ENCODE measurements at regions of chr6 and their contacts with region 1.

Region 1: DNA sequence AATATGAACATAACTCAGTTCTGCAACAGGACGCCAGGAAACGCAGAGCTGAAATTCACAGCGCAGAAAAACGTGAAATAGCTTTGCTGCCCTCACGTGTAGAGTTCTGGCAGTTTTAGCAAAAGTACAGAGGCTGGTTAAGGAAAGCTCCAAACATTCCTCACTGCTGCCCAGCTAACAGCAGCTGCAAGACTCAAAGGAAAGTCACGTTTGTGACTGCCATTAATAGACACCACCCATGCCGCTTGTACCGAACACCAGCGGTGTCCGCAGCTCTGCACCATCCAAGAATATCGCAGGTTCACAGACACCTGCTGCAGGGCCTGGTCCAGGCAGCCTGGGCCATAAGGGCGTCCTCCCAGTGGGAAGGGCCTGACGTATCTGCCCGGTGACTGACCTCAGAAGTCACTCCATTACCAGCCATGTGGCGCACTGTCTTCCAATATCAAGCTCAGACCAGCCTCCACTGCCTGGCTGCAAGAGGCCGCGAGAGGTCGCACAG is 61.4 kb downstream of the WDR27 start:
- DNase-seq: no peak
- H3K4me3 ChIP-seq: no peak overlapping the region
- H3K27ac ChIP-seq: no peak overlapping the region
- H3K4me1 ChIP-seq: no peaks in the 10 kb centered on the region
- H3K27me3 ChIP-seq: no peaks in the 10 kb centered on the region
- CTCF ChIP-seq: peak in 1 of 3 donors; percentile 28
- EP300 ChIP-seq: no peak
- POLR2A ChIP-seq: no peak

Region 2: DNA sequence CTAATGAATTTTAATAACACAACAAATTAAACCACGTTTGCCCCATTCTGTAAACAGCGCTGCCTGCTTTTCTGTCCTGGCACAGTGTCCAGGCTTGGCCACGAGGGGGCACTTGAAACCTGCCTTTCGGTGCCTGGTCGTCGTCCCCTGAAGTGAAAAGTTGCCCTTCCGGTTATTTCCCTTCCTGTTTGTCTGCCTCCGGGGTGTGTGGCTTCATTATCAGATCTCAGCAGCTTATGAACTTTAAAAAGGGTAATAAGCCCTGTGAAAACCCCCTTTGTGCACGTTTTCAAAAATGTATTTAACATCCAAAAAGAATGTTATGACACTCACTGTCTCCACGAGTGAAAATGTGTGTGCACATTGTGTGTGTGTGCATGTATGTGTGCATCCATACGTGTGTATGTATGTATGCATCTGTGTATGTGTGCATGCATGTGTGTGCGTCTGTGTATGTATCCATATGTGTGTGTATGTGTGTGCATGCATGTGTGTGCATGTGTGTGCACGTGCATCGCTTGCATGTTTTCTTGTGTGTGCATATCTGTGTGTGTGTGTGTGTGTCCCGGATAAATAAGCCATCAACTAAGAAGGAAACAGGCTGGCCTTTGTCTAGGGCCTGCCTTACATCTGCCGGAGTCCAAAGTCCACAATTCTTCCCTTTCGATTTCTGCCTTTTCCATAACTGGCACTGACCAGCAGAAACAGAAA is 745.1 kb before region 1 on chr6:
- intact Hi-C with region 1: loop called in 1 of 4 experiments (anchors 10 kb)
- DNase-seq: peak; percentile 75 to 87 (median 86)
- H3K4me3 ChIP-seq: no peak overlapping the region
- H3K27ac ChIP-seq: no peak overlapping the region
- H3K4me1 ChIP-seq: peaks cover 2% of the 10 kb centered on the region
- H3K27me3 ChIP-seq: no peaks in the 10 kb centered on the region
- CTCF ChIP-seq: peak; percentile 78 to 90 (median 88)
- EP300 ChIP-seq: no peak
- POLR2A ChIP-seq: no peak

Region 3: GRCh38 chr6:168908887-168909286 is 731.5 kb before region 1 on chr6:
- intact Hi-C with region 1: loop called in 1 of 4 experiments (anchors 5 kb)
- DNase-seq: no peak
- H3K4me3 ChIP-seq: no peak overlapping the region
- H3K27ac ChIP-seq: no peak overlapping the region
- H3K4me1 ChIP-seq: peaks cover 1% of the 10 kb centered on the region
- H3K27me3 ChIP-seq: no peaks in the 10 kb centered on the region
- CTCF ChIP-seq: peak; percentile 11 to 49 (median 38)
- EP300 ChIP-seq: no peak
- POLR2A ChIP-seq: no peak

Region 4: GRCh38 chr6:168956884-168957730 is 683.3 kb before region 1 on chr6:
- intact Hi-C with region 1: loop called in 1 of 4 experiments (anchors 5 kb)
- DNase-seq: peak; percentile 67 to 81 (median 78)
- H3K4me3 ChIP-seq: no peak overlapping the region
- H3K27ac ChIP-seq: no peak overlapping the region
- H3K4me1 ChIP-seq: peaks cover 2% of the 10 kb centered on the region
- H3K27me3 ChIP-seq: no peaks in the 10 kb centered on the region
- CTCF ChIP-seq: peak; percentile 56 to 76 (median 69)
- EP300 ChIP-seq: no peak
- POLR2A ChIP-seq: no peak

Region 5: GRCh38 chr6:169312658-169313346 is 327.6 kb before region 1 on chr6:
- intact Hi-C with region 1: no loop called
- DNase-seq: peak in 3 of 5 donors; percentile 43 to 58 (median 50)
- H3K4me3 ChIP-seq: no peak overlapping the region
- H3K27ac ChIP-seq: no peak overlapping the region
- H3K4me1 ChIP-seq: no peaks in the 10 kb centered on the region
- H3K27me3 ChIP-seq: no peaks in the 10 kb centered on the region
- CTCF ChIP-seq: no peak
- EP300 ChIP-seq: no peak
- POLR2A ChIP-seq: no peak

Region 6: GRCh38 chr6:169503422-169504152 is 136.8 kb before region 1 on chr6:
- intact Hi-C with region 1: loop called in 1 of 4 experiments (anchors 10 kb)
- DNase-seq: no peak
- H3K4me3 ChIP-seq: no peak overlapping the region
- H3K27ac ChIP-seq: no peak overlapping the region
- H3K4me1 ChIP-seq: peaks cover 3% of the 10 kb centered on the region
- H3K27me3 ChIP-seq: no peaks in the 10 kb centered on the region
- CTCF ChIP-seq: no peak
- EP300 ChIP-seq: no peak
- POLR2A ChIP-seq: no peak

Region 7: GRCh38 chr6:169710009-169710408 is 69.6 kb after region 1 on chr6:
- intact Hi-C with region 1: loop called in 1 of 4 experiments (anchors 2 kb)
- DNase-seq: no peak
- H3K4me3 ChIP-seq: no peak overlapping the region
- H3K27ac ChIP-seq: no peak overlapping the region
- H3K4me1 ChIP-seq: no peaks in the 10 kb centered on the region
- H3K27me3 ChIP-seq: no peaks in the 10 kb centered on the region
- CTCF ChIP-seq: no peak
- EP300 ChIP-seq: no peak
- POLR2A ChIP-seq: no peak

Region 8: GRCh38 chr6:170024952-170025911 is 384.8 kb after region 1 on chr6:
- intact Hi-C with region 1: no loop called
- DNase-seq: peak; percentile 38 to 74 (median 66)
- H3K4me3 ChIP-seq: no peak overlapping the region
- H3K27ac ChIP-seq: no peak overlapping the region
- H3K4me1 ChIP-seq: no peaks in the 10 kb centered on the region
- H3K27me3 ChIP-seq: no peaks in the 10 kb centered on the region
- CTCF ChIP-seq: no peak
- EP300 ChIP-seq: no peak
- POLR2A ChIP-seq: no peak

Measured in ovary (tissue), 10 donors.